H1 (cell line): ENCODE measurements at regions of chr3 and their contacts with region 1.

Region 1: DNA sequence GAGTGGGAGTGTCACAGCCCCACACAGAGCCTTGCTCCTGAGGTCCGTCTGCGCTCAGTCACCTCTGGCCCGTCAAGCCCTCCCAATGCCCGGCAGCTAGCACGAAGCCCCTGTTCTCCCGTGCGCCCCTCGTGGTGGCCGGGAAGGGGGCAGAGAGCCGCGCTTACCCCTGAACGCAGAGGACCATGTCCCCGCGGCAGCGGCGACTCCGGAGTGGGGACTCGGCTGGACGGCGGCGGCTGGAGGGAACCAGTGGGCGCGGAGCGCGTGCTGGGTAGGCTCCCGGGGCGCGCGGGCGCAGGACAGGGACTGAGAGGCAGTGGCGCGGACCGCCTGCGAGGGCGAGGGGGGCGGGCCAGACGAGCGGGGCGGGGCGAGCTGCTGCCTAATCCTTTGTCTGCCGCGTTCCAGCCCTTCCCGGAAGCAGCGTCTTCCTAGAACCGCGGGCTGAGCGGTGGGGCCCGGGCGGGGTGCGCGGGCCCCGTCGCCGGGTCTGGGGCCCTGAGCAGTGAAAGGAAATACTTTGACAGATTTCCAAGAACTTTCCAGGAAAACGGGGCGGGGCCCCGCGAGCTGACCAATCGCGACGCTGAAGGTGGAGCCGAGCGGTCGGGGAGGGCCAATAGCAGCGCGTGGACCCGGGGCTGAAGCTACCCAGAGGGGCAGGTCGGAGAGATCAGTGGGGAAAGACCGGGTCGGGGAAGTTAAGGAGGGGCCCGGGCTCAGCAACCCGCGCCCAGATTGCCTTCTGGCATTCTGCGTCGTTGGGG is at the start of gene CISH:
- DNase-seq: peak; percentile 84 to 97
- H3K4me3 ChIP-seq: peak within 1 kb of the TSS; percentile 39 to 70 (median 50)
- H3K27ac ChIP-seq: no peak within 1 kb of the TSS
- H3K4me1 ChIP-seq: peaks cover 0 to 14% (median 5%) of the 10 kb centered on the region in 4 experiments; a peak in 5 of 7 replicates
- H3K27me3 ChIP-seq: peaks cover 12 to 39% (median 32%) of the 10 kb centered on the region in 4 experiments; a peak in 6 of 7 replicates
- CTCF ChIP-seq: peak in 2 of 3 experiments; percentile 63 to 81; a peak in 3 of 4 replicates
- EP300 ChIP-seq: no peak
- POLR2A ChIP-seq: no peak
- RAD21 ChIP-seq: peak; percentile 30 to 46; a peak in 2 of 4 replicates
- total RNA-seq, gene CISH: 1.9 and 3.1 TPM in 2 replicates

Region 2: GRCh38 chr3:50350527-50351322 is 260.9 kb before region 1 on chr3 and contains the starts of genes CYB561D2 and NPRL2:
- CTCF ChIA-PET with region 1: interaction called, 14 read pairs
- POLR2A ChIA-PET with region 1: no interaction called
- DNase-seq: peak; percentile 72 to 93
- H3K4me3 ChIP-seq: peak within 1 kb of the TSS; percentile 79 to 87 (median 82)
- H3K27ac ChIP-seq: no peak within 1 kb of the TSS
- H3K4me1 ChIP-seq: peaks cover 0 to 11% (median 8%) of the 10 kb centered on the region in 4 experiments; a peak in 5 of 7 replicates
- H3K27me3 ChIP-seq: peaks cover 0 to 4% (median 4%) of the 10 kb centered on the region in 4 experiments; a peak in 4 of 7 replicates
- CTCF ChIP-seq: no peak
- EP300 ChIP-seq: no peak
- POLR2A ChIP-seq: peak in 1 of 2 experiments; percentile 59; a peak in 2 of 3 replicates
- RAD21 ChIP-seq: no peak
- total RNA-seq, gene CYB561D2: 9.8 and 9.9 TPM in 2 replicates
- total RNA-seq, gene NPRL2: 25.0 and 28.4 TPM in 2 replicates

Region 3: DNA sequence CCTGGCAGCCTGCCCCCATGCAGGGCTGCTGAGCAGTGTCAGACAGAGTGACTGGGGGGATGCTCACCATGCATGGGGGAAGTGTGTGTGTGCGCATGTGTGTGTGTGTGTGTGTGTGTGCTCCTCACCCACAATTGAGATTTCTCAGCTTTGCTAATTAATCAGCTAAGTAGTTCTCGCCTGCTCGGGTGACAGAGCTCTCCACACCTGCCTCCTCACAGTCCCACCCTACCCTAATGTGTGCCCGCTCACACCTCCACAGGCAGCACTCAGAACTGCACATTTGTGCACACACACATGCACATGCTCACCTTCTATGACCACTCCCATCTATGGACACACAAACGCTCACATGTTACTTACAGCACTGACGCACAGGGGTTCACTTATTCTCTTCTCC is 145.5 kb before region 1 on chr3:
- CTCF ChIA-PET with region 1: no interaction called
- POLR2A ChIA-PET with region 1: no interaction called
- DNase-seq: no peak
- H3K4me3 ChIP-seq: no peak overlapping the region
- H3K27ac ChIP-seq: no peak overlapping the region
- H3K4me1 ChIP-seq: peaks cover 0 to 4% (median 1%) of the 10 kb centered on the region in 4 experiments; a peak in 3 of 7 replicates
- H3K27me3 ChIP-seq: peaks cover 0 to 3% (median 0%) of the 10 kb centered on the region in 4 experiments; a peak in 1 of 7 replicates
- CTCF ChIP-seq: peak in 1 of 3 experiments; percentile 9; a peak in 1 of 4 replicates
- EP300 ChIP-seq: no peak
- POLR2A ChIP-seq: no peak
- RAD21 ChIP-seq: no peak

Region 4: DNA sequence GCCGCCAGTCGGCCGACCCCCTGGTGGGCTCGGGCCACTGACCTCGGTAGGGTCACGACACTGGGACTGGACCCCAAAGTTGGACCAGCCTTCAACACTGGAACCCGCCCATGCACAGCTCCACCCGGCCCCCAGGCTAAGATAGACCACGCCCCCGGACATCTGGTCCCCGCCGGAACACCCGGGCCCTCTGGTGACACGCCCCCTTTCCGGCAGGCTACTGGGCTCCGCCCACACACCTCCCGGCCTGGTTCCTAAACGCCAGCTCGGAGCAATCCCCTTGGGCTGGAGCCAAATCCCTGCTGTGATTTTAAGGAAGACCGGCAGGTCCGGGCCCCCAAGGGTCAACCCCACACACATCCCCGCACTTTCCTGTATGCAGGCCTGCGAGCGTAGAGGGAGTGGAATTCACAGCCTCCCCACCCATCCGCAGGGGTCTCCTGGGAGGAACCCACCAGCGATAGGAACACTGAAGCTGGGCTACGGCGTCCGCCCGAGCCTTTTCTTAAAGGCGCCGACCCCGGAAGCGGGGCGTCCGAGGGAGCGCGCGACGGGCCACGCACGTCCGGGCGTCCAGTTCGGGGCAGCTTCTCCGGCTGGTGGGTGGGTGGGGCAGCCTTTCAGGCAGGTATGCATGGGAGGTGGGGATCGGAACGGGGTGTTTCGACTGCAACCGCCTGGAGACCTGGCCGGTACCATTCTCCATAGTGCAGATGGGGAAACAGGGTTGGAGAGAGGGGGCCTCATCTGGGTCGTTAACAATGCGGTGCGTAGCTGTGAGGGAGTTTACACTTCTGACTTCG is 42.5 kb before region 1 on chr3 and contains the start of gene HEMK1:
- CTCF ChIA-PET with region 1: interaction called, 863 read pairs
- POLR2A ChIA-PET with region 1: interaction called, 7 read pairs
- DNase-seq: peak; percentile 79 to 99
- H3K4me3 ChIP-seq: peak within 1 kb of the TSS; percentile 68 to 98 (median 77)
- H3K27ac ChIP-seq: peak within 1 kb of the TSS; percentile 65
- H3K4me1 ChIP-seq: peaks cover 0 to 6% (median 4%) of the 10 kb centered on the region in 4 experiments; a peak in 5 of 7 replicates
- H3K27me3 ChIP-seq: peaks cover 0 to 13% (median 5%) of the 10 kb centered on the region in 4 experiments; a peak in 4 of 7 replicates
- CTCF ChIP-seq: no peak
- EP300 ChIP-seq: no peak
- POLR2A ChIP-seq: peak in 1 of 2 experiments; percentile 25; a peak in 2 of 3 replicates
- RAD21 ChIP-seq: no peak
- total RNA-seq, gene HEMK1: 9.6 and 9.7 TPM in 2 replicates

Region 5: GRCh38 chr3:50600841-50601591 is 10.6 kb before region 1 on chr3:
- CTCF ChIA-PET with region 1: interaction called, 39 read pairs
- POLR2A ChIA-PET with region 1: interaction called, 7 read pairs
- DNase-seq: no peak
- H3K4me3 ChIP-seq: no peak overlapping the region
- H3K27ac ChIP-seq: no peak overlapping the region
- H3K4me1 ChIP-seq: no peaks in the 10 kb centered on the region
- H3K27me3 ChIP-seq: peaks cover 0 to 2% (median 0%) of the 10 kb centered on the region in 4 experiments; a peak in 1 of 7 replicates
- CTCF ChIP-seq: no peak
- EP300 ChIP-seq: no peak
- POLR2A ChIP-seq: no peak
- RAD21 ChIP-seq: no peak

Region 6: DNA sequence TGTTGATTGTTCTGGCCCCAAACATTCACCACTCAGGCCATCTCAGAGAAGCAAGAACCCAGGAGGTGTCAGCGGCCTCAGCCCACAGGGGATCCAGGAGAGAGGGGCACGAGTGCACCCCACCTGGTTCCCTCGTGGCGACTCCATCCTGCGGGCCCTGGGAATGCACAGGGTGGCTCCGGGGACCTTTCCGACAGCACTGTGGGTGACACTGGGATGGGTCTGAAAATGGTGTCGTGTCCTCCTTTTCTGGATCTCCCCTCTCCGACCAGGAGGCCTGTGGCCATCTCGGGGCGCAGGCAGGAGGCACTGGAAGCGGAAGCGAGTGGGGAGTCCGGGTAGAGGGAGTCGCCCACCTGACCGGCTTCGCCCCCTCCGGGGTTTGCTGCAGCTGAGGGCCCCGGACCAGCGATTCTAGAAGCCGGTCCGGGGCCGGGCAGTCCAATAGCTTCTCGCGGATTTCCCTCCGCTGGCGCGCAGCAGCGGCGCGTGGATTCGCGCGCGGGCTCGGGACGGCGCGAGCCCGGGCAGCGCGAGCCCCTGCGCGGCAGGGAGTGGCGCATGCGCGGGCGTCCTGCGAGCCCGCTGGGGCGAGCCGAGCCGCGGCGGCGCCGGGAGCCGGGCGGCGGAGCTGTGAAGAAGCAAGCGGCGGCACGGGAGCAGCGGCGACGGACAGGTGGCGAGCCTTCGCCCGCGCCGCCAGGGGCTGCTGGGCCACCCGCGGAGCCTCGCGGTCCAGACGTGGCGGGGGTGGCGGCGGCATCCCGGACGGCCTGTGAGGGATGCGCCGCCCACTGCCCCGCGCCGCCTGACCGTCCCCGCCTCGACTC is 62.9 kb after region 1 on chr3 and contains the start of gene DOCK3:
- CTCF ChIA-PET with region 1: interaction called, 1,262 read pairs
- POLR2A ChIA-PET with region 1: interaction called, 3 read pairs
- DNase-seq: peak in 1 of 2 experiments; percentile 72
- H3K4me3 ChIP-seq: peak within 1 kb of the TSS; percentile 51 to 81 (median 62)
- H3K27ac ChIP-seq: peak within 1 kb of the TSS; percentile 34; the same call in 1 of the 2 replicates
- H3K4me1 ChIP-seq: peaks cover 4 to 10% (median 6%) of the 10 kb centered on the region in 4 experiments
- H3K27me3 ChIP-seq: peaks cover 0 to 16% (median 14%) of the 10 kb centered on the region in 4 experiments; a peak in 6 of 7 replicates
- CTCF ChIP-seq: no peak
- EP300 ChIP-seq: no peak
- POLR2A ChIP-seq: 0 out of 3 replicates have a peak, but pooled peaks of 1 of the 2 experiments have one; percentile 16
- RAD21 ChIP-seq: no peak
- total RNA-seq, gene DOCK3: 4.6 and 5.0 TPM in 2 replicates

Region 7: GRCh38 chr3:50786631-50787030 is 175.0 kb after region 1 on chr3:
- CTCF ChIA-PET with region 1: no interaction called
- POLR2A ChIA-PET with region 1: no interaction called
- DNase-seq: no peak
- H3K4me3 ChIP-seq: no peak overlapping the region
- H3K27ac ChIP-seq: no peak overlapping the region
- H3K4me1 ChIP-seq: peaks cover 0 to 3% (median 1%) of the 10 kb centered on the region in 4 experiments; a peak in 4 of 7 replicates
- H3K27me3 ChIP-seq: no peaks in the 10 kb centered on the region
- CTCF ChIP-seq: no peak
- EP300 ChIP-seq: no peak
- POLR2A ChIP-seq: no peak
- RAD21 ChIP-seq: no peak

Region 8: GRCh38 chr3:51371943-51372557 is 760.4 kb after region 1 on chr3:
- CTCF ChIA-PET with region 1: interaction called, 35 read pairs
- POLR2A ChIA-PET with region 1: no interaction called
- DNase-seq: peak in 1 of 2 experiments; percentile 73
- H3K4me3 ChIP-seq: no peak overlapping the region
- H3K27ac ChIP-seq: no peak overlapping the region
- H3K4me1 ChIP-seq: no peaks in the 10 kb centered on the region
- H3K27me3 ChIP-seq: no peaks in the 10 kb centered on the region
- CTCF ChIP-seq: peak in 2 of 3 experiments; percentile 74 to 79; a peak in 3 of 4 replicates
- EP300 ChIP-seq: no peak
- POLR2A ChIP-seq: no peak
- RAD21 ChIP-seq: peak; percentile 85 to 89

Region 9: GRCh38 chr3:51391075-51391567 is 779.5 kb after region 1 on chr3 and contains the start of gene RBM15B:
- CTCF ChIA-PET with region 1: interaction called, 53 read pairs
- POLR2A ChIA-PET with region 1: interaction called, 9 read pairs
- DNase-seq: peak; percentile 93 to 98
- H3K4me3 ChIP-seq: peak within 1 kb of the TSS; percentile 75 to 90 (median 82)
- H3K27ac ChIP-seq: peak within 1 kb of the TSS; percentile 81
- H3K4me1 ChIP-seq: peaks cover 4 to 30% (median 17%) of the 10 kb centered on the region in 4 experiments
- H3K27me3 ChIP-seq: no peaks in the 10 kb centered on the region
- CTCF ChIP-seq: peak in 1 of 3 experiments; percentile 84; a peak in 2 of 4 replicates
- EP300 ChIP-seq: peak in 1 of 2 experiments; percentile 83; a peak in 1 of 3 replicates
- POLR2A ChIP-seq: peak in 1 of 2 experiments; percentile 94; a peak in 2 of 3 replicates
- RAD21 ChIP-seq: peak; percentile 57 to 62; a peak in 3 of 4 replicates
- total RNA-seq, gene RBM15B: 59.1 and 60.9 TPM in 2 replicates